Adrenal gland (tissue), 19 donors: ENCODE measurements at regions of chr7 and their contacts with region 1.

Region 1: GRCh38 chr7:136594739-136595144 is 273.7 kb upstream of the CHRM2 start:
- DNase-seq: no peak
- H3K4me3 ChIP-seq: no peak overlapping the region
- H3K27ac ChIP-seq: no peak overlapping the region
- H3K4me1 ChIP-seq: no peaks in the 10 kb centered on the region
- H3K27me3 ChIP-seq: no peaks in the 10 kb centered on the region
- CTCF ChIP-seq: no peak
- POLR2A ChIP-seq: no peak

Region 2: DNA sequence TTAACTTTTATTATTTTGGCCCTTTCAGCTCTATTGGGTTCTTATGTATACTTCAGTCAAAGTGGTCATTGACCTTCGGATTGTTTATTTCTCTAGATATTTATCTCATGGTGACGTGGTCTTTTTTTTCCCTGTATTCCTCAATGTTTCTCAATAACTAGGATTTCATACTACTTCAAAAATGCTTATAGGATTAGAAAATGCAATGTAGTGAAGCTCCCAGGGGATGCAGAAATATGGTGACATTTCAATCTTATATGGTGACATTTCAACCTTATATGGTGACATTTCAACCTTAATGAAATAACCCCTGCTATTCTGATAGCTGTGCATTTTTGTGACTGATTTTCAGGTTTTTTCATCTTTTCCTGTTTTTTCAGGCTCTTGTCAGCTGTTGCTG is 325.1 kb after region 1 on chr7:
- intact Hi-C with region 1: loop called in 1 of 2 experiments (anchors 5 kb)
- DNase-seq: no peak
- H3K4me3 ChIP-seq: no peak overlapping the region
- H3K27ac ChIP-seq: no peak overlapping the region
- H3K4me1 ChIP-seq: no peaks in the 10 kb centered on the region
- H3K27me3 ChIP-seq: no peaks in the 10 kb centered on the region
- CTCF ChIP-seq: no peak
- POLR2A ChIP-seq: no peak